ENCODE measurements at regions of chr3 and their contacts with region 1.

Region 1: DNA sequence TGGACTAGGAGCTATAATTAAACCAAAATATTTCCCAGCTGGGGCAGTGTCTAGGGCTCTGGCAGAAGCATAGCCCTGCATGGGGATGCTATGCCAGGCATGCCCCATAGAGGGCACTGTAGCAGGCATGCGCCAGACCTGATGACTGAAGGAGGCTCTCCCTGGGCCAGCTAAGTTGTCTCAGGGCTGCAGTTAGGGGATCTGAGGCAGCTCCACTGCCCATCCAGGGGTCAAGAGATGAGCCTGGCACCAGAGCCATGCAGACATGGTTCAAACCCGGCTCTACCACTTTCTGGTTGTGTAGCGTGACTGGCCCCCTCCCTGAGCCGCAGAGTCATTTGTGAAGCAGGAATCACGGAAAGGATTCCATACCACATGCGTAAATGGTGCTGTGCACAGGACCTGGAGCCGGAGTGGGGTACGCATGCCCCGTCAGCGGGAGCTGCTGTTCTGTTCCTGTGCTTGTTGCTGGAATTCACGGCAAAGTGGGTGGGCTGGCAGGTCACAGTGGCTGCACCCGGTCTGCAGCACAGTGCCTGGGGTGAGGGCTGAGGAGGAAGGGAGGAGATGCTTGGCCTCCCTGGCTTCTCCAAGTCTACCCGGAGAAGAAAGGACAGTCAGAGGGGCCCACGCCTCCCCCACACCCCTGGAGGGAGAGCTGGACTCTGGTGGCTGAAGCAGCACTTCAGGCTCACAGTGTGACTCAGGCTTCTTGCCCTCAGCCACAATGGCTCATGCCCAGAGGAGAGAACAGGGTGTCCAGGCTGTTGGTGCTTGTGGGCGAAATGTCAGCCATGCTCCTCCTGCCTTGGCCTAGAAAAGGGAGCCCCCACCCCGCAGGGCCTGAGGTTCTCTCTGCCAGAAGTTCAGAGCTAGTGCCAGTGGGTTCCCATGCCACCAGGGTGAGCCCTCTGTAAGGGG is 43.1 kb downstream of the DNASE1L3 start:
- DNase-seq: no peak
- ATAC-seq: peak; percentile 21 to 56 (median 36)
- H3K4me3 ChIP-seq: no peak overlapping the region
- H3K27ac ChIP-seq: peak overlapping the region; percentile 66 to 98 (median 76)
- H3K4me1 ChIP-seq: peaks cover 0 to 71% (median 26%) of the 10 kb centered on the region in 4 donors
- H3K27me3 ChIP-seq: no peaks in the 10 kb centered on the region
- CTCF ChIP-seq: peak; percentile 63 to 89 (median 72)
- POLR2A ChIP-seq: no peak

Region 2: GRCh38 chr3:58116161-58116955 is 51.3 kb before region 1 on chr3:
- intact Hi-C with region 1: loop called in 1 of 2 experiments (anchors 10 kb)
- DNase-seq: no peak
- ATAC-seq: no peak
- H3K4me3 ChIP-seq: no peak overlapping the region
- H3K27ac ChIP-seq: peak overlapping the region; percentile 27 to 85 (median 78)
- H3K4me1 ChIP-seq: peaks cover 0 to 57% (median 29%) of the 10 kb centered on the region in 4 donors
- H3K27me3 ChIP-seq: no peaks in the 10 kb centered on the region
- CTCF ChIP-seq: no peak
- POLR2A ChIP-seq: no peak

Region 3: DNA sequence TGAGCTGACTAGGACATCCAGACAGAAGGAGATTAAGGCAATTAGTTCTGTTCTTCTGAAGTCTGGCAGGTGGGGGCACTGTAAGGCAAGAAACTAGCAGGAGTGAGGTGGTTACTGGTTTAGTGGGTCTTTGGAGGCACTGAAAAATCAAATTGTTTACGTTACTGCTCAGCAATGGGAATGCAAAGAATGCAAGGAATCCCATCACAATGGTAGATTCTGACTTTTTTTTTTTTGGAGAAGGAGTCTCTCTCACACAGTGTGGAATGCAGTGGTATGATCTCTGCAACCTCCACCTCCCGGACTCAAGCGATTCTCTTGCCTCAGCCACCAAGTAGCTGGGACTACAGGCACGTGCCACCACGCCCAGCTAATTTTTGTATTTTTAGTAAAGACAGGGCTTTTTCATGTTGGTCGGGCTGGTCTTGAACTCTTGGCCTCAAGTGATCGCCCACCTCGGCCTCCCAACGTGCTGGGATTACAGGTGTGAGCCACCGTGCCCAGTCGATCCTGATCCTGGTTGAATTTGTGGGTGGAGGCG is 393.1 kb after region 1 on chr3:
- intact Hi-C with region 1: no loop called
- DNase-seq: peak in 1 of 3 donors; percentile 28
- ATAC-seq: peak in 2 of 4 donors; percentile 19 to 25
- H3K4me3 ChIP-seq: no peak overlapping the region
- H3K27ac ChIP-seq: no peak overlapping the region
- H3K4me1 ChIP-seq: peaks cover 0 to 4% (median 0%) of the 10 kb centered on the region in 4 donors
- H3K27me3 ChIP-seq: no peaks in the 10 kb centered on the region
- CTCF ChIP-seq: peak in 2 of 4 donors; percentile 11 to 20
- POLR2A ChIP-seq: no peak